ENCODE measurements at regions of chr20 and their contacts with region 1.

Region 1: GRCh38 chr20:47620808-47621805 is 119.4 kb downstream of the NCOA3 start:
- DNase-seq: peak in 4 of 14 experiments; percentile 27 to 73 (median 68)
- ATAC-seq: peak; percentile 52
- H3K4me3 ChIP-seq: no peak overlapping the region
- H3K4me3 Mint-ChIP-seq: no peak overlapping the region
- H3K27ac ChIP-seq: no peak overlapping the region
- H3K27ac Mint-ChIP-seq: peak overlapping the region; percentile 25
- H3K4me1 ChIP-seq: no peaks in the 10 kb centered on the region
- H3K4me1 Mint-ChIP-seq: peaks cover 23% of the 10 kb centered on the region
- H3K27me3 ChIP-seq: no peaks in the 10 kb centered on the region
- H3K27me3 Mint-ChIP-seq: no peaks in the 10 kb centered on the region
- CTCF ChIP-seq: peak; percentile 85

Region 2: GRCh38 chr20:46583411-46584214 is 1037.5 kb before region 1 on chr20:
- CTCF ChIA-PET with region 1: no interaction called
- POLR2A ChIA-PET with region 1: no interaction called
- intact Hi-C with region 1: no loop called
- DNase-seq: no peak
- ATAC-seq: no peak
- H3K4me3 ChIP-seq: no peak overlapping the region
- H3K4me3 Mint-ChIP-seq: no peak overlapping the region
- H3K27ac ChIP-seq: no peak overlapping the region
- H3K27ac Mint-ChIP-seq: no peak overlapping the region
- H3K4me1 ChIP-seq: no peaks in the 10 kb centered on the region
- H3K4me1 Mint-ChIP-seq: no peaks in the 10 kb centered on the region
- H3K27me3 ChIP-seq: no peaks in the 10 kb centered on the region
- H3K27me3 Mint-ChIP-seq: peaks cover 23% of the 10 kb centered on the region
- CTCF ChIP-seq: no peak

Region 3: GRCh38 chr20:47196091-47197081 is 424.7 kb before region 1 on chr20:
- CTCF ChIA-PET with region 1: interaction called, 4 read pairs
- POLR2A ChIA-PET with region 1: no interaction called
- intact Hi-C with region 1: loop called (anchors 1 to 2 kb)
- DNase-seq: peak; percentile 44 to 81 (median 66)
- ATAC-seq: peak; percentile 74
- H3K4me3 ChIP-seq: no peak overlapping the region
- H3K4me3 Mint-ChIP-seq: no peak overlapping the region
- H3K27ac ChIP-seq: no peak overlapping the region
- H3K27ac Mint-ChIP-seq: no peak overlapping the region
- H3K4me1 ChIP-seq: peaks cover 5% of the 10 kb centered on the region
- H3K4me1 Mint-ChIP-seq: no peaks in the 10 kb centered on the region
- H3K27me3 ChIP-seq: no peaks in the 10 kb centered on the region
- H3K27me3 Mint-ChIP-seq: peaks cover 3% of the 10 kb centered on the region
- CTCF ChIP-seq: peak; percentile 98

Region 4: GRCh38 chr20:47272893-47273590 is 348.1 kb before region 1 on chr20:
- CTCF ChIA-PET with region 1: interaction called, 24 read pairs
- POLR2A ChIA-PET with region 1: interaction called, 3 read pairs
- intact Hi-C with region 1: loop called (anchors 1 kb)
- DNase-seq: peak in 12 of 14 experiments; percentile 7 to 81 (median 31)
- ATAC-seq: peak; percentile 84
- H3K4me3 ChIP-seq: no peak overlapping the region
- H3K4me3 Mint-ChIP-seq: no peak overlapping the region
- H3K27ac ChIP-seq: no peak overlapping the region
- H3K27ac Mint-ChIP-seq: peak overlapping the region; percentile 52
- H3K4me1 ChIP-seq: no peaks in the 10 kb centered on the region
- H3K4me1 Mint-ChIP-seq: peaks cover 28% of the 10 kb centered on the region
- H3K27me3 ChIP-seq: no peaks in the 10 kb centered on the region
- H3K27me3 Mint-ChIP-seq: no peaks in the 10 kb centered on the region
- CTCF ChIP-seq: peak; percentile 98

Region 5: GRCh38 chr20:47461120-47461685 is 159.9 kb before region 1 on chr20:
- CTCF ChIA-PET with region 1: no interaction called
- POLR2A ChIA-PET with region 1: no interaction called
- intact Hi-C with region 1: no loop called
- DNase-seq: no peak
- ATAC-seq: no peak
- H3K4me3 ChIP-seq: no peak overlapping the region
- H3K4me3 Mint-ChIP-seq: no peak overlapping the region
- H3K27ac ChIP-seq: no peak overlapping the region
- H3K27ac Mint-ChIP-seq: no peak overlapping the region
- H3K4me1 ChIP-seq: no peaks in the 10 kb centered on the region
- H3K4me1 Mint-ChIP-seq: no peaks in the 10 kb centered on the region
- H3K27me3 ChIP-seq: no peaks in the 10 kb centered on the region
- H3K27me3 Mint-ChIP-seq: no peaks in the 10 kb centered on the region
- CTCF ChIP-seq: no peak

Region 6: GRCh38 chr20:47610247-47610944 is 10.7 kb before region 1 on chr20:
- CTCF ChIA-PET with region 1: interaction called, 22 read pairs
- POLR2A ChIA-PET with region 1: interaction called, 4 read pairs
- intact Hi-C with region 1: no loop called
- DNase-seq: peak in 13 of 14 experiments; percentile 31 to 75 (median 46)
- ATAC-seq: peak; percentile 89
- H3K4me3 ChIP-seq: no peak overlapping the region
- H3K4me3 Mint-ChIP-seq: peak overlapping the region; percentile 22
- H3K27ac ChIP-seq: peak overlapping the region; percentile 46 to 65
- H3K27ac Mint-ChIP-seq: peak overlapping the region; percentile 81
- H3K4me1 ChIP-seq: peaks cover 27% of the 10 kb centered on the region
- H3K4me1 Mint-ChIP-seq: peaks cover 72% of the 10 kb centered on the region
- H3K27me3 ChIP-seq: no peaks in the 10 kb centered on the region
- H3K27me3 Mint-ChIP-seq: no peaks in the 10 kb centered on the region
- CTCF ChIP-seq: no peak

Measured in CD4-positive, alpha-beta T cell (primary cell).